Activated naive CD4-positive, alpha-beta T cell treated with anti-CD3 and anti-CD28 coated beads for 36 hours (primary cell): ENCODE measurements at regions of chrX and their contacts with region 1.

Region 1: GRCh38 chrX:1453951-1454785 is 1.5 kb upstream of the ASMTL start:
- DNase-seq: peak; percentile 96
- H3K4me3 Mint-ChIP-seq: peak overlapping the region; percentile 56
- H3K27ac Mint-ChIP-seq: peak overlapping the region; percentile 10
- H3K4me1 Mint-ChIP-seq: peaks cover 18% of the 10 kb centered on the region
- H3K27me3 Mint-ChIP-seq: no peaks in the 10 kb centered on the region

Region 2: GRCh38 chrX:1246816-1247215 is 207.4 kb before region 1 on chrX:
- CTCF ChIA-PET with region 1: no interaction called
- intact Hi-C with region 1: loop called (anchors 1 kb)
- DNase-seq: peak; percentile 94
- H3K4me3 Mint-ChIP-seq: no peak overlapping the region
- H3K27ac Mint-ChIP-seq: no peak overlapping the region
- H3K4me1 Mint-ChIP-seq: peaks cover 33% of the 10 kb centered on the region
- H3K27me3 Mint-ChIP-seq: no peaks in the 10 kb centered on the region

Region 3: DNA sequence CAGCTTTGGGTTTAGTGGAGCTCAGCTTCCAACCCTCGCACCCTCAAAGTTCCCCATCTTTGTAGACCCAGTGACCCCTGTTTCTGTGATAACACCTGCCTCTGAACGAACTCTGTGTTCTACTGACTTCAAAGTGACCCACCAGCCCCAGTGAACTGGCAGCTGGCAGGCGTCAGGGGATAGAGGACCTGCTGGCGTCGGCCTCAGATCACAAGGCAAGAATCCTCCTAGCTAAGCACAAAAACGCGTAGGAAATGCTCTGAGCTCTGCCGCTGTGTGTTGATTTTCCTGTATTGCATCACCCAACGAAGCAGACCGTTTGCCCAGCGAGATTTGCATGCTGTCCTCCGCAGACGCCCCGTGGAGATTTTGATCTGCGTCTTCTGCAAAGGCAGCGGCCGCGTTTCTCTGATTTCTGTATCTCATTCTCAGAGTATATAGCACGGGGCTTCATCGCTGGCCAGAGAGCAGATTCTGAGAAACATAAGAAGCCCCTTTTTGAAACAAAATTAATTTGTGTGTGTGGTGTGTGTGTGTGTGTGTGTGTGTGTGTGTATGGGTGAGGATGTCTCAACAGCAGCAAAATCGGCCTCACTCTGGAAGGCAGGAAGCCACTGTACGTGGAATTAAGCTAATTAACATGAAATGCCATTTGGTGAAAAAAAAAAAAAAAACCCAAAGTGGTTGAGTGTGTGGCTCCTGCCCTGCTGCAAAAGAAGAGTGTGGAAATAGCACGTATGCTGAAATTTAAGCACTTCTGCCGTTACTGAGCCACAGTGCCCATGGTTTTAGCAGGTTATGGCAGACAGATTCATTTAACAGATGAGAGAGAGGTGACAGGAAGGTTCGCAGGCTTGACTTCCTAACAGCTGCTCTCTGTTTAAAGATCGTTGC is 27.7 kb after region 1 on chrX:
- CTCF ChIA-PET with region 1: no interaction called
- intact Hi-C with region 1: loop called (anchors 1 kb)
- DNase-seq: peak; percentile 84
- H3K4me3 Mint-ChIP-seq: peak overlapping the region; percentile 88
- H3K27ac Mint-ChIP-seq: peak overlapping the region; percentile 100
- H3K4me1 Mint-ChIP-seq: peaks cover 66% of the 10 kb centered on the region
- H3K27me3 Mint-ChIP-seq: no peaks in the 10 kb centered on the region

Region 4: DNA sequence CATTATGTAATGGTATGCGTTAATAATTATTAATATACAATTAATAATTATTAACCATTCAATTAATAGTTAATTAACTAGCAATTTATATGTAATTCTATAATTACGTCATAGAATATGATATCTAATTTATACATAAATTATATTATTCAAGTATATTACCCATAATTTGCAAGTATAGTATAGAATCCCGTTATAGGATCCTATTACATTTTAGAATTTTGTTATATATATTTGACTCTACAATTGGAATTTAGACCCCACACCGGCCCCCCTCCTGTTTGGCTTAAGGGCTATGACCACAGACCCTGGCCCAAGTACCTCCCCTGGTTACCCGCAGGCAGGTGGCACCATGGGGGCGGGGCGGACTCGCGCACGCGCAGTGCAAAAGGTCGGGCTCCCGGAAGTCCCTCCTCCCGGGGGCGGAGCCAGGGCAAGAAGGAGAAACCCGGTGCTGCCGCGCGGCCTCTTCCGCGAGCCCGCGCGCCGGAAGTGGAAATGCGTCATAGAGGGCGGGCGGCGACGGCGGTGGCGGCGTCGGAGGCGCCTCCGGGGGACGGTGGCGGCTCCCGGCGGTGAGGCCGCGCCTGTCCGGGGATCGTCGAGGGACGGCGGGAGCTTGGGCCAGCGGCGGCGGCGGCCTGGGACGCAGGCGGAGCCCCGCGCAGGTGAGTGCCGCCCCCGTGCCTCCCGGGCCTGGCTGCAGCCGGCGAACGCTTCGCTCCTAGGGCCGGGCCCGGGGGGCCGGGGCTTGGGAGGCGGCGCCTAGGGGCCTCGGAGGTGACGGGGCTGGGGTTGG is 137.1 kb after region 1 on chrX and contains the start of gene AKAP17A:
- CTCF ChIA-PET with region 1: no interaction called
- intact Hi-C with region 1: loop called (anchors 1 kb)
- DNase-seq: peak; percentile 98
- H3K4me3 Mint-ChIP-seq: peak within 1 kb of the TSS; percentile 91
- H3K27ac Mint-ChIP-seq: peak within 1 kb of the TSS; percentile 89
- H3K4me1 Mint-ChIP-seq: peaks cover 31% of the 10 kb centered on the region
- H3K27me3 Mint-ChIP-seq: no peaks in the 10 kb centered on the region
- total RNA-seq, gene AKAP17A: 59.2 to 60.5 TPM

Region 5: DNA sequence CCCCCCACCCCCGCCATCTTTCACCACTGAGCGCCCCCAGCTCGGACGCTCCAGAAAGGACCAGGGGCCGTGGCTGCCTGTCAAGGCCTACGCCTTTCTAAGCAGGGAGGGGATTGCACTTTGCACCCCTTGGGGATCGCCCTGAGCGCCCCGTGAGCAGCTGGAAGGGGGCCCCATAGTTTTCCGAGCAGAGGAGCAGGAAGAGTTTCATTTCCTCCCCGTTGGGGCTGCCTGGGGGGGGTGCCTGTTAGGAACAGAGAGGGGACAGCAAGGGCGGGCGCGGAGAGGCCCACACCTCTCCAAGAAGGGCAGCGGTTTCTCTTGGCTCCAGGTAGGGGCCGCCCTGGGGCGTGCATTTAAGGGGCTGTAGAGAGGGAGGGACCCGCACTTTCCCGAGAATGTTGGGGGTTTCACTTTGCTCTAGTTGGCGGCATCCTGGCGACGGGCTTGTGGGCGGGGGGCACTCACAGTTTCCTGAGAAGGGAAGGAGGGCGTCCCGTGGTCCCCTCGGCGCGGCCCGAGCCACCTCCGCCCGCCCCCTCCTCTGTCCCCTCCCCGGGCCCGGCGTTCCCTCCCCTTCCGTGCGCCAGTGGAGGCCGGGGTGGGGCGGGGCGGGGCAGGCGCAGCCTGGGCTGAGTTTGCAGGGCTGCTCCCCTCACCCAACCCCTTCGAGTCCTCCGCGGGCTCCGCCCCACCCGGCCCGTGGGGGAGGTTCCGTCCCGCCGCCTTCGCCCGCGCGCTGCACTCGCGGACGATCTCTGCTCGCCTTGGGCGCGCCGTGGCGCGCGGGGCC is 1154.7 kb after region 1 on chrX:
- CTCF ChIA-PET with region 1: no interaction called
- intact Hi-C with region 1: loop called (anchors 2 kb)
- DNase-seq: peak; percentile 82
- H3K4me3 Mint-ChIP-seq: peak overlapping the region; percentile 90
- H3K27ac Mint-ChIP-seq: peak overlapping the region; percentile 82
- H3K4me1 Mint-ChIP-seq: peaks cover 45% of the 10 kb centered on the region
- H3K27me3 Mint-ChIP-seq: no peaks in the 10 kb centered on the region

Region 6: DNA sequence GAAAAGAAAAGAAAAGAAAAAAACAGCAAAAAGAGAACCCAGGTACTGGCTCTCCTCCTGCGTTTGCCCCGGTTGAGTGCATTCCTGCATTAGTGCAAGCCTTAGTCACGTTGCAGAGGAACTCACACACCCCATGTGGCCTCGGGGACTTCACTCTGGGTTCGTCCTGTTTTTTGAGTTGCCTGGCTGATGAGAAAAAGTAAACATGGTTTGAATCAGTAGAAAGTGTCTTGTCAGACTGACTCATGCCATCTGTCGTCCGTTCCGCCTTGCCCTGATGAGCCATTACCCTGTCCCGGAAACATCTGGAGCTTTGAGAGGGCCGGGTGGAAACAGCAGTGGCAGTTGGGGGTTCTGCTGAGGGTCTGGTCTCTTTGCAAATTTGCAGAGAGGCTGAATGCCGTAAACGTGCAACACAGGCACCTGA is 1253.2 kb after region 1 on chrX:
- CTCF ChIA-PET with region 1: no interaction called
- intact Hi-C with region 1: loop called (anchors 1 kb)
- DNase-seq: peak; percentile 90
- H3K4me3 Mint-ChIP-seq: peak overlapping the region; percentile 28
- H3K27ac Mint-ChIP-seq: peak overlapping the region; percentile 99
- H3K4me1 Mint-ChIP-seq: peaks cover 92% of the 10 kb centered on the region
- H3K27me3 Mint-ChIP-seq: no peaks in the 10 kb centered on the region